ENCODE measurements at regions of chr15 and their contacts with region 1.

Region 1: DNA sequence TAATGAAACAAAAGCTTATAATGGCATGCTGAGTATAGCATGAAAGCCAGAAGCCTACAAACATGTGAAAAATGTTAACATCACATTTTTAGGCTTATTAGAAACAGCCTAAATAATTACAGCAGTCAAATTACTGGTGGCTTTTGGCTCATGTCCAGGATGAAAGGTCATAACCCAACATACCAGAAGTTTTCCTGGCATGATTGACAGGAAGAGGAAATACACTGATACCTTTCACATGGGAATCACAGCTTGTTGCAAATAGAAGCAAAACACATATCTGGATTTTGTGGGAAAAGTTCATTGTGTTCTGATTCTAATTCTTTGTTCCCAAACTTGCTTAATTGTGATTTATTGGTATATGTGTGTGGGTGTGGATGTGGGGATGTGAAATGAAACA is 393.5 kb upstream of the ARRDC4 start:
- DNase-seq: no peak
- ATAC-seq: no peak
- H3K4me3 ChIP-seq: no peak overlapping the region
- H3K4me3 Mint-ChIP-seq: no peak overlapping the region
- H3K27ac ChIP-seq: no peak overlapping the region
- H3K27ac Mint-ChIP-seq: no peak overlapping the region
- H3K4me1 ChIP-seq: no peaks in the 10 kb centered on the region
- H3K4me1 Mint-ChIP-seq: no peaks in the 10 kb centered on the region
- H3K27me3 ChIP-seq: no peaks in the 10 kb centered on the region
- H3K27me3 Mint-ChIP-seq: no peaks in the 10 kb centered on the region

Region 2: GRCh38 chr15:97585408-97585807 is 18.4 kb after region 1 on chr15:
- CTCF ChIA-PET with region 1: no interaction called
- POLR2A ChIA-PET with region 1: interaction called in 1 of 2 experiments, 13 read pairs
- DNase-seq: no peak
- ATAC-seq: no peak
- H3K4me3 ChIP-seq: no peak overlapping the region
- H3K4me3 Mint-ChIP-seq: no peak overlapping the region
- H3K27ac ChIP-seq: no peak overlapping the region
- H3K27ac Mint-ChIP-seq: no peak overlapping the region
- H3K4me1 ChIP-seq: no peaks in the 10 kb centered on the region
- H3K4me1 Mint-ChIP-seq: no peaks in the 10 kb centered on the region
- H3K27me3 ChIP-seq: peaks cover 0 to 5% of the 10 kb centered on the region in 2 experiments
- H3K27me3 Mint-ChIP-seq: peaks cover 0 to 3% of the 10 kb centered on the region in 2 donors